H1 (cell line): ENCODE measurements at regions of chr9 and their contacts with region 1.

Region 1: GRCh38 chr9:34546834-34547827 is 24.3 kb upstream of the ENHO start:
- DNase-seq: peak; percentile 47 to 93
- H3K4me3 ChIP-seq: no peak overlapping the region
- H3K27ac ChIP-seq: no peak overlapping the region
- H3K4me1 ChIP-seq: peaks cover 0 to 2% (median 0%) of the 10 kb centered on the region in 4 experiments; a peak in 1 of 7 replicates
- H3K27me3 ChIP-seq: peaks cover 0 to 10% (median 4%) of the 10 kb centered on the region in 4 experiments; a peak in 5 of 7 replicates
- CTCF ChIP-seq: peak; percentile 77 to 93 (median 87)
- EP300 ChIP-seq: no peak
- POLR2A ChIP-seq: no peak
- RAD21 ChIP-seq: peak; percentile 84 to 88

Region 2: DNA sequence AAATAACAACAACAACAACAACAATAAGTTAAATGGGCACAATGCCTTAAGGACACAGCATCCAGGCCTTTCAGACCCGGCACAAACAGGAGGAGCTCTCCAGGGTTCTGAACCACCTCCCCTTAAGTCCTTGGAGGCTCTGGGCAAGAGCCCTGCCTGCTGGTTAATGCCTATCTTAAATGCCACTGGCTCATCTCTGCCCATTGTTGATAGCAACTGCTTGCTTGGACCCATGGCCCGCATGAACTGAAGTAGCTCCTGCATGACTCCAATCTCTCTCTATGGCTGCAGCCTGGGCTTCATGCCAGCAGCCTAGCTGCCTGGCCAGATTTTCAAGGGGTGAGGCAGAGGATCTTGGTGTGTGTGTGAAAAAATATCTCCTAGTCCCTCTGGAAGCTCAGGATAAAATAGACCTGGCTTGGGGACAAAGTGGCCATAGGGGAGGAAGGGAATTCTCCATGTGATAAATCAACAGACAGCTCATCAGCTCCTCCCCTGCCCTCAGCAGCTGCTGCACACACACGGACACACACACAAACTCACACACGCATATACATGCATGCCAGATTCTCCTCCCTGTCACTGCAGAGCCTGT is 116.2 kb before region 1 on chr9:
- CTCF ChIA-PET with region 1: interaction called, 39 read pairs
- POLR2A ChIA-PET with region 1: no interaction called
- DNase-seq: peak; percentile 34 to 69
- H3K4me3 ChIP-seq: no peak overlapping the region
- H3K27ac ChIP-seq: no peak overlapping the region
- H3K4me1 ChIP-seq: no peaks in the 10 kb centered on the region
- H3K27me3 ChIP-seq: no peaks in the 10 kb centered on the region
- CTCF ChIP-seq: no peak
- EP300 ChIP-seq: no peak
- POLR2A ChIP-seq: no peak
- RAD21 ChIP-seq: peak in 1 of 2 experiments; percentile 8; a peak in 1 of 4 replicates

Region 3: DNA sequence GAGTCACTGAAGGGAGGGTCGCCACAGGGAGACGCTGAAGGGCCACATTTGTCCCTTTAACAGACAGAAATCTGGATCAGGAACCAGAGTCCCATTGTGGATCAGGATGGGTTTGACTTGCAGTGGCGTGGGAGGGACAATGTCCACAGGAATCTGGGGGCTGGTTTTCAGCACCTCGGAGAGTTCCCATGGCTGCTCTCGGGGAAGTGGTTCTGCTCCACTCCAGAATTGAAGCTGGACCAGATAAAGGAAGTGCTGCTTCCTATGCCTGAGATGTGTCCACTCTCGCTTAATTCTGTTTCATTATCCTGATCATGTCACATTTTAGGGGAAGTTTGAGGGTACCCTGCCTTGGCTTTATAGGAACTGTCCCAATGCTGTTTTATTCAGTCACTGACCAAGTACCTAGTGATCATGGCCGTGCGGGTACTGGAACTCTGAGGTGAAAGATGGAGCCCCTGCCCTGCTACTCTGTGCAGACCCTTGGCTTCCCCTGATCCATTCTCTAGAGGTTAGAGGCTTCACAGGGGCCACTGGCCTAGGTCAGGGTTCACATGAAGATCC is 53.1 kb before region 1 on chr9:
- CTCF ChIA-PET with region 1: interaction called, 61 read pairs
- POLR2A ChIA-PET with region 1: no interaction called
- DNase-seq: peak in 1 of 2 experiments; percentile 84
- H3K4me3 ChIP-seq: no peak overlapping the region
- H3K27ac ChIP-seq: no peak overlapping the region
- H3K4me1 ChIP-seq: no peaks in the 10 kb centered on the region
- H3K27me3 ChIP-seq: no peaks in the 10 kb centered on the region; a peak in 1 of 7 replicates
- CTCF ChIP-seq: no peak
- EP300 ChIP-seq: no peak
- POLR2A ChIP-seq: no peak
- RAD21 ChIP-seq: no peak

Region 4: DNA sequence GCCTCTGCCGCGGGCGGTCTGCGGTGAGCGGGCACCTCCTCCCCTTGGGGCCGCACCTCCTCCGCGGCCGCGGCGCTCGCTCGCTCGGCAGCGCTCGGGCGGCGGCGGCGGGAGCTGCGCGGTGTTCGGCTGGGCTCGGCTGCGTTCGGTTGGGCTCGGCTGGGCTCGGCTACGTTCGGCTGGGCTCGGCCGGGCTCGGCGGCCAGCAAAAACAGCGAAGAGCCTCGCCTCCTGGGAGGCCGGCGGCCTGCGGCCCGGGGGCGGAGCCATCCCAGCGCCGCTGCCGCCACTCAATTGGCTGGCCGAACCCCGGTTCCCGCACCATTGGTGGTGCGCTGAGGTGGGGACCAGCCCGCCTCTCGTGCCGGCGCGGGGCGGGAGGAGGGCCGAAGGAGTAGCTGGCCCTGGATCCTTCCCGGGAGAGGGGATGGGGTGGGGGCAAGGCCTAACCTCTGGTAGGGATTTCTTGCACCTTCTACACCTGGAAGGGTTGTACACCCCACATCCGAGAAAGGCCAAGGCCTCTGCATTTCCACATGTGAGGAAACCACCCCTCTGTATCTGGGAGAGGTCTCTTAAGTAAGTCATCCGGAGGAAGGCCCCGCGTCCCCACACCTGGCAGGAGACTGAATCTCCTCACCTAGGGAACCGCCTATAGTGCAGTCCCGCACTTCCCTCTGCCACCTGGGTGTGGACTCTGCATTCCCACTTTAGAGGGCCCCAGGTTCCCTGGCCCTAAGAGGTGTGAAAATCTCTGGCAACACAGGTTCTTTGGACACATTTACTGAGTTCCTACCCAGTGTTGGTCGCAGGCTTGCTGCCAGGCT is 23.9 kb before region 1 on chr9 and contains the start of gene ENHO:
- CTCF ChIA-PET with region 1: interaction called, 23 read pairs
- POLR2A ChIA-PET with region 1: no interaction called
- DNase-seq: peak; percentile 82 to 99
- H3K4me3 ChIP-seq: peak within 1 kb of the TSS; percentile 56 to 78 (median 64)
- H3K27ac ChIP-seq: no peak within 1 kb of the TSS
- H3K4me1 ChIP-seq: peaks cover 0 to 17% (median 8%) of the 10 kb centered on the region in 4 experiments; a peak in 6 of 7 replicates
- H3K27me3 ChIP-seq: peaks cover 1 to 14% (median 11%) of the 10 kb centered on the region in 4 experiments; a peak in 6 of 7 replicates
- CTCF ChIP-seq: no peak
- EP300 ChIP-seq: no peak
- POLR2A ChIP-seq: 0 out of 3 replicates have a peak, but pooled peaks of 1 of the 2 experiments have one; percentile 38
- RAD21 ChIP-seq: no peak
- total RNA-seq, gene ENHO: 12.2 and 14.1 TPM in 2 replicates

Region 5: DNA sequence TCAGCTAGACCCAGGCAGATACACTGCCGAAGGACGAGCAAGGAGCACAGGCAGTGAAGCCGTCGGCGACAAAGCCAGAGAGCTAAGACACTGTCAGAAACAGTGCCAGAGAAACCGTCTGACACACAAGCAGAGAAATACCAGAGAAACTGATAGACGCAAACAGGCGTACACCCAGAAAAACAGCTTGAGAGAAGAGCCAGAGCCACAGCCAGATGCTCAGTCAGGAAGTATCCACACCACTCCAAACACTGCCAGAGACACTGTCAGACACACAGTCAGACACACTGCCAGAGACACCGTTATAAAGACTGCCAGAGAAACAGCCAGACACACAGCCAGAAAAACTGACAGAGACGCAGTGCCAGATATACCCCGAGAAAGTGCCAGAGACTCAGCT is 23.2 kb after region 1 on chr9:
- CTCF ChIA-PET with region 1: interaction called, 97 read pairs
- POLR2A ChIA-PET with region 1: no interaction called
- DNase-seq: no peak
- H3K4me3 ChIP-seq: no peak overlapping the region
- H3K27ac ChIP-seq: no peak overlapping the region
- H3K4me1 ChIP-seq: peaks cover 9 to 44% (median 17%) of the 10 kb centered on the region in 4 experiments
- H3K27me3 ChIP-seq: peaks cover 0 to 10% (median 5%) of the 10 kb centered on the region in 4 experiments; a peak in 3 of 7 replicates
- CTCF ChIP-seq: no peak
- EP300 ChIP-seq: no peak
- POLR2A ChIP-seq: no peak
- RAD21 ChIP-seq: no peak